ENCODE measurements at regions of chr17 and their contacts with region 1.

Region 1: GRCh38 chr17:76397687-76398487 is 13.5 kb downstream of the SPHK1 start:
- DNase-seq: peak; percentile 88 to 97 (median 94)
- H3K4me3 ChIP-seq: no peak overlapping the region
- H3K27ac ChIP-seq: no peak overlapping the region
- H3K4me1 ChIP-seq: no peaks in the 10 kb centered on the region
- H3K27me3 ChIP-seq: no peaks in the 10 kb centered on the region
- CTCF ChIP-seq: peak; percentile 96 to 98 (median 98)
- POLR2A ChIP-seq: peak in 1 of 2 donors; percentile 16

Region 2: GRCh38 chr17:75707131-75707571 is 690.7 kb before region 1 on chr17:
- intact Hi-C with region 1: no loop called
- DNase-seq: peak in 3 of 7 donors; percentile 35 to 61 (median 50)
- H3K4me3 ChIP-seq: no peak overlapping the region
- H3K27ac ChIP-seq: peak overlapping the region in 1 of 5 donors; percentile 65
- H3K4me1 ChIP-seq: no peaks in the 10 kb centered on the region
- H3K27me3 ChIP-seq: no peaks in the 10 kb centered on the region
- CTCF ChIP-seq: no peak
- POLR2A ChIP-seq: no peak

Region 3: DNA sequence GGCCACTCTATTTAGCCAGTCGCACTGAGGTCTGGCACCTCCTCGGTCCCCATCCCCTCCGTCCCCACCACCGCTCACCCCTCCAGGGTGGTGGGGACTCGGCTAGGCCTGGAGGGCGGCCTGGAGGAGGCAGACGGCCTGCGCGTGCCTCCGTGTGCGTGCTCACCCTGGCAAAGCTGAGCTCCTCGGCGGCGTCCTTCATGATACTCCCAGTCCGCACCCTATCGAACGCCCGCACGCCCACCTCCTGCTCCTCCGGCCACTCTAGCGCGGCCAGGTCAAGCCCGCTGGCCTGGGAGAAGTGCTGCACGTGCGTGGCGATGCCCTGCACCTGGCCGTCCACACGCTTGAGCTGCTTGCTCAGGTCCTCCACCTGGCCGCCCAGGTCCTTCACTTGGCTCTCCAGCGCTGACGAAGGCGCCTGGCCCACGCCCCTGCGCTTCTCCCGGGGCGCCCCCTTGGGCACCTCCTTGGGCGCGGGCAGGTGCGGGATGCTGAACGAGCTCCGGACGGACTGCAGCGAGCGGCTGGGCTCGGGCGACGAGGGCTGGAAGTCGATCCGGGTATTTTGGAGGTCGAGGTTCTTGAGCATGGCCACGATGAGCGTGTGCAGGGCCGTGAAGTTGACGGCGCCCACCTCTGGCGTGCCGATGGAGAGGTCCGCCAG is 90.5 kb before region 1 on chr17:
- intact Hi-C with region 1: loop called (anchors 5 kb)
- DNase-seq: no peak
- H3K4me3 ChIP-seq: no peak overlapping the region
- H3K27ac ChIP-seq: no peak overlapping the region
- H3K4me1 ChIP-seq: no peaks in the 10 kb centered on the region
- H3K27me3 ChIP-seq: no peaks in the 10 kb centered on the region
- CTCF ChIP-seq: no peak
- POLR2A ChIP-seq: no peak